ENCODE measurements at regions of chr1 and their contacts with region 1.

Region 1: GRCh38 chr1:117128323-117129079 is 7.0 kb upstream of the TRIM45 start:
- DNase-seq: peak; percentile 16
- H3K4me3 ChIP-seq: no peak overlapping the region
- H3K27ac ChIP-seq: no peak overlapping the region
- H3K4me1 ChIP-seq: no peaks in the 10 kb centered on the region
- H3K27me3 ChIP-seq: no peaks in the 10 kb centered on the region
- CTCF ChIP-seq: peak; percentile 53 to 54

Region 2: DNA sequence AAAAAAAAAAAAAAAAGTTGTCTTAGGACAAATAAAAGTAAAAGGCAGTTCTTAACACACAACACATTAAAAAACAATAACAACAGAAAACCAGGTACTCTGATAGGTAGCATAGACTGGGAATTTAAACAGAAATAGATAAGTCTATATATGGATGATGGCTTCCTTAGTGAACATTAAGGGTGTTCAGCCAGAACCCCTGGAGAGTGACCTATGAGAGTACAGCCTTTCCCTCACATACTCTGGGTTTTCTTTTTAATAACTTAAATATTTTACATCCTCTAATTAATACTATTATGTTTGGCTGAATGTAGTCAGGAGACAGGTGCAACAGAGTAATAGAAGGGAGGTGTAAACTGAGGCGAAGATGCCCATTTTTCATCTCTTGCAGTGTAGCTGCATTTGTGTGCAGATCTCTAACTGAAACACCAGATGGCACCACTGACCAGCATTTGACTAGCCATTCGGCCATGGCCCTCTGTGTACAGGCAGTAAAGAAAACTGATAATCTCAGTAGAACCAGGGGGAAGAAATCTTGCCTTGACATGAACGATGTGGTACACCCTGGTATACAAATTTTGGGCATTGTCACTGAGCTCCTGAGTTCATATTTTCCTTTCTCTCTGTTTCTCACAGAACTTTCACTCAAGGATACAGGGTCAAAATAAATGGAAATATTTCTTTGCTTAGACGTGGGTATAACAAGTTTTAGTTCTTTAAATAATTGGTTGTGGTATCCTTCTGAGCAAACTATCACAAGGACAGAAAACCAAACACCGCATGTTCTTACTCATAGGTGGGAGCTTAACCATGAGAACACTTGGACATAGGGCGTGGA is 60.7 kb before region 1 on chr1:
- CTCF ChIA-PET with region 1: interaction called, 22 read pairs
- dilution Hi-C with region 1: no loop called
- in situ Hi-C with region 1: no loop called
- intact Hi-C with region 1: loop called (anchors 1 kb)
- DNase-seq: peak; percentile 31
- H3K4me3 ChIP-seq: no peak overlapping the region
- H3K27ac ChIP-seq: no peak overlapping the region
- H3K4me1 ChIP-seq: no peaks in the 10 kb centered on the region
- H3K27me3 ChIP-seq: no peaks in the 10 kb centered on the region
- CTCF ChIP-seq: peak; percentile 73 to 87

Region 3: DNA sequence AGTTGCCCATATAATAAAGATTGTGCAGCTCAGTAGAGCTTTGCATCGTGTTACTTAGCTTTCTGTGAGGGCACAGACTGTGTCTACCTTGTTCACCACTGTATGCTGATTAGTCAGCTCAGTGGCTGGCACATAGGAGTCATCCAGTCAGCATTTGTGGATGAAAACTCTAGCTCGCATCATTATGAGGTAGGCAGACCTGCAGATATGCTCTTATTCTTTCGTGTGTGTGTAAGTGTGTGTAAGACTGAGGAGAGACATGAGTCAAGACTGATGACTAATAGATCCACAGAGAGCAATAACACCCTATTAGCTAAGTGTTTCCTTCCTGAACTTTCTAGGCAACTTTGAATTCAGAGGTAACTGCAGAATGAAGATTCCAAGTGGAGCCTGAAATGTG is 51.2 kb before region 1 on chr1:
- CTCF ChIA-PET with region 1: interaction called, 3 read pairs
- dilution Hi-C with region 1: no loop called
- in situ Hi-C with region 1: loop called in 1 of 2 experiments (anchors 5 kb)
- intact Hi-C with region 1: no loop called
- DNase-seq: peak; percentile 98
- H3K4me3 ChIP-seq: no peak overlapping the region
- H3K27ac ChIP-seq: peak overlapping the region; percentile 65
- H3K4me1 ChIP-seq: peaks cover 17% of the 10 kb centered on the region
- H3K27me3 ChIP-seq: no peaks in the 10 kb centered on the region
- CTCF ChIP-seq: no peak

Region 4: GRCh38 chr1:117110774-117111173 is 17.7 kb before region 1 on chr1:
- CTCF ChIA-PET with region 1: no interaction called
- dilution Hi-C with region 1: no loop called
- in situ Hi-C with region 1: no loop called
- intact Hi-C with region 1: no loop called
- DNase-seq: peak; percentile 70
- H3K4me3 ChIP-seq: no peak overlapping the region
- H3K27ac ChIP-seq: peak overlapping the region; percentile 32
- H3K4me1 ChIP-seq: peaks cover 19% of the 10 kb centered on the region
- H3K27me3 ChIP-seq: no peaks in the 10 kb centered on the region
- CTCF ChIP-seq: no peak

Region 5: GRCh38 chr1:117268535-117269455 is 140.3 kb after region 1 on chr1:
- CTCF ChIA-PET with region 1: no interaction called
- dilution Hi-C with region 1: no loop called
- in situ Hi-C with region 1: loop called in 1 of 2 experiments (anchors 25 kb)
- intact Hi-C with region 1: no loop called
- DNase-seq: peak; percentile 10
- H3K4me3 ChIP-seq: no peak overlapping the region
- H3K27ac ChIP-seq: no peak overlapping the region
- H3K4me1 ChIP-seq: no peaks in the 10 kb centered on the region
- H3K27me3 ChIP-seq: no peaks in the 10 kb centered on the region
- CTCF ChIP-seq: no peak

Region 6: DNA sequence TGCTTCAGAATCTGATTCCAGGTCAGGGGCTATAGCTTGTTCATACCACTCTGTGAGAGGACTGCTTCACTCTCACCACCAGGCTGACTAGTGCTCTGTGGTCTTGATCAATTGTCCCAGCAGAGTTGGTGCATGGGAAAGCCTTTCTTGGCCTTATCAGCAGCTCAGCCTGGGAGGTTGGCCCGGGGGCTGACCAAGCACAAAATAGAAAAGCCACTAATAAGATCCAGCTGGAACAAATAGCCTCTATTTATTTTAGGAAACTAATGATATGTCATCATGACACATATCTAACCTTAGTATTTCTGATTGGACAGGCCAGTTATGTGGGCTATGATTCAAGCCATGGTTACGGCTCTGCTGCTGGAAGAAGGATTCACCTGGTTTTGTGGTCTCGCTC is 666.7 kb after region 1 on chr1:
- CTCF ChIA-PET with region 1: no interaction called
- dilution Hi-C with region 1: no loop called
- in situ Hi-C with region 1: no loop called
- intact Hi-C with region 1: no loop called
- DNase-seq: peak; percentile 96
- H3K4me3 ChIP-seq: no peak overlapping the region
- H3K27ac ChIP-seq: no peak overlapping the region
- H3K4me1 ChIP-seq: peaks cover 21% of the 10 kb centered on the region
- H3K27me3 ChIP-seq: no peaks in the 10 kb centered on the region
- CTCF ChIP-seq: peak in 1 of 2 donors; percentile 13

Measured in mammary epithelial cell (primary cell).